ENCODE measurements at regions of chr22 and their contacts with region 1.

Region 1: DNA sequence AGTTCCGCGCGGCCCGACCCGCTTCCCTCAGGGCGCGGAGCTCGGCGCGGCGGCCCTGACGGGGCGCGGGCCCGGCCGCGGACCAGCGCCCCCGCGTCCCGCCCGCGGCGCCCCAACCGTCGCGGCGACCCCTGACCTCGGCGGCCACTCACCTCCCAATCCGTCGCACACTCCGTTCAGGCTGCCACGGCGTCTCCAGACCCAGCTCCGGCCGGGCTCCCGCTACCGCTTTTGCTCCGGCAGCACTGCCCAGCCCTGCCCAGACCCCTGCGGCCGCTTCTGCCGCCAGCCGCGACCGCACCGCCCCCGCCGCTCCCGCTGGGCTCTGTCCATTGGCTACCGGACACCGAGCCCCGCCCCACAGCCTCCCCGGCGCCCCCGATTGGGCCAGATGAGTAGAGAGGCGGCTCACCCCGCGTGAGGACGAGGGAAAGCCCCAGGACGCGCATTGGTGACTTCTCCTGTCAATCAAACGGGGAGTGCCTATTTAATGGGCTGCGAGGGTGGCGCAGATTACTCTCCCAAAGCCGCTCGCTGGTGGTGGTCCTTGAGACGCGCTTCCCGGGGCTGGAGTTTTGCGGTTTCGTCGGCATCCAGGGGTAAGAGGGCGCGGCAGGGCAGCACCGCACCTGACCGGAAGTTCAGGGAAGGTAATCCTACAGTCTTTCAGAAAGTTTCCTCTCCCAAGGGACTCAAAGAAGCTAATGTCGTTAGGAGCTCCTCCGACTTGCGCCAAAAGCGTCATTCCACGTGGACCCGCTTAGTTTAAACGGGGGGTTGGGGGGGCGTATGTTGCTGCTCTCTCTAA is at the start of gene PACSIN2:
- DNase-seq: peak; percentile 96 to 99 (median 98)
- ATAC-seq: peak; percentile 98 to 99 (median 99)
- H3K4me3 ChIP-seq: peak within 1 kb of the TSS; percentile 80 to 88
- H3K4me3 Mint-ChIP-seq: peak within 1 kb of the TSS; percentile 94 to 97 (median 95)
- H3K27ac ChIP-seq: peak within 1 kb of the TSS; percentile 75
- H3K27ac Mint-ChIP-seq: peak within 1 kb of the TSS; percentile 94 to 98
- H3K4me1 ChIP-seq: peaks cover 13 to 23% of the 10 kb centered on the region in 2 experiments
- H3K4me1 Mint-ChIP-seq: peaks cover 31 to 41% (median 41%) of the 10 kb centered on the region in 3 donors
- H3K27me3 ChIP-seq: no peaks in the 10 kb centered on the region
- H3K27me3 Mint-ChIP-seq: no peaks in the 10 kb centered on the region
- total RNA-seq, gene PACSIN2: 25.9 to 49.0 (median 40.4) TPM

Region 2: GRCh38 chr22:42649246-42650099 is 365.6 kb before region 1 on chr22 and contains the start of gene CYB5R3:
- CTCF ChIA-PET with region 1: no interaction called
- POLR2A ChIA-PET with region 1: interaction called in 1 of 2 experiments, 16 read pairs
- DNase-seq: peak; percentile 49 to 83 (median 65)
- ATAC-seq: peak; percentile 81 to 87 (median 83)
- H3K4me3 ChIP-seq: peak within 1 kb of the TSS; percentile 76 to 80
- H3K4me3 Mint-ChIP-seq: peak within 1 kb of the TSS; percentile 90 to 92 (median 92)
- H3K27ac ChIP-seq: peak within 1 kb of the TSS; percentile 72
- H3K27ac Mint-ChIP-seq: peak within 1 kb of the TSS; percentile 85 to 92
- H3K4me1 ChIP-seq: peaks cover 4 to 51% of the 10 kb centered on the region in 2 experiments
- H3K4me1 Mint-ChIP-seq: peaks cover 32 to 38% (median 35%) of the 10 kb centered on the region in 3 donors
- H3K27me3 ChIP-seq: peaks cover 0 to 11% of the 10 kb centered on the region in 2 experiments
- H3K27me3 Mint-ChIP-seq: no peaks in the 10 kb centered on the region
- total RNA-seq, gene CYB5R3: 40.8 to 58.6 (median 51.0) TPM

Region 3: GRCh38 chr22:42959576-42960509 is 55.2 kb before region 1 on chr22:
- CTCF ChIA-PET with region 1: no interaction called
- POLR2A ChIA-PET with region 1: no interaction called
- DNase-seq: no peak
- ATAC-seq: peak in 2 of 4 experiments; percentile 36 to 43
- H3K4me3 ChIP-seq: no peak overlapping the region
- H3K4me3 Mint-ChIP-seq: peak overlapping the region in 2 of 3 donors; percentile 25 to 48
- H3K27ac ChIP-seq: no peak overlapping the region
- H3K27ac Mint-ChIP-seq: peak overlapping the region; percentile 32 to 41
- H3K4me1 ChIP-seq: peaks cover 10 to 20% of the 10 kb centered on the region in 2 experiments
- H3K4me1 Mint-ChIP-seq: peaks cover 58 to 70% (median 59%) of the 10 kb centered on the region in 3 donors
- H3K27me3 ChIP-seq: no peaks in the 10 kb centered on the region
- H3K27me3 Mint-ChIP-seq: no peaks in the 10 kb centered on the region

Region 4: DNA sequence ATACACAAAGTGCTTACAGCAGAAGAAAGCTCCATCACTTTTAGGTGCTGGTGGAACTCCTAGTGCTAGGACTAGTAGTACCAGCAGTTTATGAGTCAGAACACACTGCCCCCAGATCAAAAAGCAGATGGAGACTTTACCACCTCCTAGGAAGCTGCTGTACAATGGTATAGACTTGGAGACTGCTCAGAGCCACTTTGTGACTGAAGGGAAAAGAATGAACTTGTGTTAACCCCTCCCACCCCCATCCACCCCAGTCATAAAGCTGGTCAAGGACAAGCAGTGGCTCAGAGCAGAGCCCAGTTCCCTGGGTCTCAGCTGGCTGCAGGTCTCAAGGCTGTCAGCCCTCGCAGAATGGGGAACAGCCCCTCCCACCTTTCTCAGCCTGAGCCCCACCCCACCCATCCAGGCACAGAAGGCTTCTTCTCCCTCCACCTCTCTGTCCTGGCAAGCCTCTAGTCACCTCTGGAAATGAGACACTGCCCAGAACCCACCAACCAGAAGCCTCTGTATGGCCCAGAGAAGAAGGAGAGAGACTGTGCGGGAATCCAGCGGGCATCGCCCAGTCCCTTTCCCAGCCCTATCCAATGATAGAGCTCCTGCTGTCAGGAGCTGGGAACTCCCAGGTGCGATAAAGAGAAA is 23.9 kb before region 1 on chr22:
- CTCF ChIA-PET with region 1: no interaction called
- POLR2A ChIA-PET with region 1: interaction called in 1 of 2 experiments, 13 read pairs
- DNase-seq: no peak
- ATAC-seq: no peak
- H3K4me3 ChIP-seq: no peak overlapping the region
- H3K4me3 Mint-ChIP-seq: no peak overlapping the region
- H3K27ac ChIP-seq: no peak overlapping the region
- H3K27ac Mint-ChIP-seq: no peak overlapping the region
- H3K4me1 ChIP-seq: peaks cover 0 to 2% of the 10 kb centered on the region in 2 experiments
- H3K4me1 Mint-ChIP-seq: peaks cover 26 to 42% (median 39%) of the 10 kb centered on the region in 3 donors
- H3K27me3 ChIP-seq: no peaks in the 10 kb centered on the region
- H3K27me3 Mint-ChIP-seq: no peaks in the 10 kb centered on the region